Activated CD8-positive, alpha-beta T cell treated with anti-CD3 and anti-CD28 coated beads for 36 hours (primary cell): ENCODE measurements at regions of chr3 and their contacts with region 1.

Region 1: GRCh38 chr3:9416139-9416780 is 18.8 kb downstream of the SETD5 start:
- DNase-seq: no peak
- ATAC-seq: no peak
- H3K4me3 Mint-ChIP-seq: no peak overlapping the region
- H3K27ac Mint-ChIP-seq: peak overlapping the region; percentile 19
- H3K4me1 Mint-ChIP-seq: peaks cover 58% of the 10 kb centered on the region
- H3K27me3 Mint-ChIP-seq: no peaks in the 10 kb centered on the region
- CTCF ChIP-seq: no peak

Region 2: GRCh38 chr3:9402410-9403228 is 13.6 kb before region 1 on chr3:
- CTCF ChIA-PET with region 1: interaction called, 8 read pairs
- POLR2A ChIA-PET with region 1: interaction called, 20 read pairs
- intact Hi-C with region 1: no loop called
- DNase-seq: no peak
- ATAC-seq: no peak
- H3K4me3 Mint-ChIP-seq: no peak overlapping the region
- H3K27ac Mint-ChIP-seq: no peak overlapping the region
- H3K4me1 Mint-ChIP-seq: peaks cover 67% of the 10 kb centered on the region
- H3K27me3 Mint-ChIP-seq: no peaks in the 10 kb centered on the region
- CTCF ChIP-seq: no peak